ENCODE measurements at regions of chr6 and their contacts with region 1.

Region 1: DNA sequence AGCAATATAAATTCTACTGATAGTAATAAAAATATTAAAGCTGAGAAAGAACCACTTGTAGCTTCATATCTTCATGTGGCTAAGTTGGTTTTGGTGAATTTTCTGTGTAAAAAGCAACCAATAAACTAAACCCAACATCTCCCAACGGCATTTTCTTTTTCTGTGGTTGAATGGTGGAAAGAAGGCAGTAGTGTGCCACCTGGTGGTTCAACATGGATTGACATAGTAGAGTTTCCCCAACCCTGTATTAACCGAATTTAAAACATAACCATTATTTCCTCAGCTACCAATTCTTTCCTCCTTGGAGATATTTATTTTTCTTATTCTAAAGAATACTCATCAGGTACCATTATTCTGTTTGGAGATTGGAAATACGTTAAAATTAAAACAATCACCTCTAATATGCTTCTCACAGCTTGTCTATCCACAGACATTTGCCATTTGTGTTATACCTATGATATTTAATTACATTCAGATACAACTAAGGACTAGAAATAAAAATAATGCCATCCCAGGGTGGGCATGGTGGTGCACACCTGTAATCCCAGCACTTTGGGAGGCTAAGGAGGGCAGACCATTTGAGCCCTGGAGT is 117.1 kb upstream of the EEF1E1 start:
- DNase-seq: peak; percentile 27
- H3K4me3 ChIP-seq: no peak overlapping the region
- H3K27ac ChIP-seq: no peak overlapping the region
- H3K27me3 ChIP-seq: no peaks in the 10 kb centered on the region
- CTCF ChIP-seq: peak; percentile 84

Region 2: DNA sequence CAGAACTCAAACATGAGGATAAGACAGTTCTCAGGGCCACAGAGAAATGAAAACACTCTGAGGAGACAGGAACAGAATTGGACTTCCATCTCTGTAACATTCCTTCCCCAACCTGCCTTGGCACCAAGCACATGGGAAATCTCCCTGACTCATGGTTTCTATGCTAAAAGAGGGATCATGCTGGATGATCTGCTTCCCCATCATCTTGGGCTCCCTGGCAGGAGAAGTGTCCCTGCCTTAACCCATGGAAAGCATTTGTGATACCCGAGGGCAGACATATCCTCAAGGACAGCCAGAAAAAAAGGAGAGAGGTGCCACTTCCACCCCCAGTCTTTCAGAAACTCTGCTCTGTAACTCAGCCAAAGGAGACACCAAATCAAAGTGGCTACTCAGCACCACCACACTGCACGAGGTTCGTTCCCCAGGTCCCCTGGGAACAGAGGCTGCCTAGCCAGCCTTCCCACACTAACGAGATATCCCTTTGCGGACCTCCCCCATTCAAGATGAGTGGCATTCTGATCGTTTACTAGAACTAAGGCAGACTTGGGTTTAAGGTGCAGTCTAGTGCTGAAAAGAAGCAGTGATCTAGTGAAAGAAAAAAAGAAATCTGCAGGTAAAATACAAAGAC is 190.1 kb before region 1 on chr6:
- CTCF ChIA-PET with region 1: no interaction called
- POLR2A ChIA-PET with region 1: no interaction called
- DNase-seq: no peak
- H3K4me3 ChIP-seq: no peak overlapping the region
- H3K27ac ChIP-seq: no peak overlapping the region
- H3K27me3 ChIP-seq: no peaks in the 10 kb centered on the region
- CTCF ChIP-seq: no peak

Region 3: DNA sequence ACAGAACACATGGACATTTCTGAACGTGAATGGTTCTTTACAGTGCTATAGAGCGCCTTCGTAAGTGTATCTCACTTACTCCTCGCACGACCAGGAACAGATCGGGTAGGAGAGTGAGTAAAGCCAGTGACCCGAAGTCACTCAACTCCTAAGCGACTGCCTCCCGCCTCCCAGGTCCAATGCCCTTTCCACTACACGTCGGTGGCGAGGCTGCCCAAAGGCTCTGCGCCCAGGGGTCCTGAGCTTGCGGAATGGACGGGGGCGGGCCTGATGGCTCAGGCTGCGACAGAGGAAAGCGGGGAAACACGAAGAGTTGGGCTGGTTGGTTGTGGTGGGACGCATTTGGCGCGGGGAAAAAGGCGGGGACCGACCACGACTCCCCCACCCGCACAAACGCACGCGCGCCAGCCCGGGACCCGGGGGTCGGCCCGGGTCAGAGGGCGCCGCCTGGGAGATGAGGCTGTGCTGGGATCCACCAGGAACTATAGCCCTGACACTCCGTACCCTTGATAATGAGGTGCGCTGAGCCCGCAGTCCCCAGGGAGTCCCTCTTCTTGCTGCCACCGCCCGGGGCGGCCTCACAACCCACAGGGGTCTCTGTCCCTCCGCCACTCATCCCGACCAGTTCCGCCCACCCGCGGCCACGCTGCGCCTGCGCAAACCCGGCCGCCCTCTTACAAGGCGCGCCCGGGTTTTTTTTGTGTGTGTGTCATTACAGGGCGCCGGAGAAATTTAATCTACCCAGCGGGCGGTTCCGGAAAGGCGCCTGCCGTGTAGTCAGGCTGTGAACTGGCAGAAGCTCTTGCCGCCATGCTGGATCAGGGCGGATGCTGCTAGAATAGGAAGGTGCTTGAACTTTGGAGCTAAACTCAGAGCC is 155.4 kb before region 1 on chr6 and contains the start of gene BLOC1S5:
- CTCF ChIA-PET with region 1: interaction called, 10 read pairs
- POLR2A ChIA-PET with region 1: no interaction called
- DNase-seq: peak; percentile 91
- H3K4me3 ChIP-seq: peak within 1 kb of the TSS; percentile 90
- H3K27ac ChIP-seq: peak within 1 kb of the TSS; percentile 63
- H3K27me3 ChIP-seq: no peaks in the 10 kb centered on the region
- CTCF ChIP-seq: peak; percentile 12; the same call in 1 of the 2 replicates
- polyA plus RNA-seq, gene BLOC1S5: 8.4 and 15.1 TPM in 2 replicates

Region 4: DNA sequence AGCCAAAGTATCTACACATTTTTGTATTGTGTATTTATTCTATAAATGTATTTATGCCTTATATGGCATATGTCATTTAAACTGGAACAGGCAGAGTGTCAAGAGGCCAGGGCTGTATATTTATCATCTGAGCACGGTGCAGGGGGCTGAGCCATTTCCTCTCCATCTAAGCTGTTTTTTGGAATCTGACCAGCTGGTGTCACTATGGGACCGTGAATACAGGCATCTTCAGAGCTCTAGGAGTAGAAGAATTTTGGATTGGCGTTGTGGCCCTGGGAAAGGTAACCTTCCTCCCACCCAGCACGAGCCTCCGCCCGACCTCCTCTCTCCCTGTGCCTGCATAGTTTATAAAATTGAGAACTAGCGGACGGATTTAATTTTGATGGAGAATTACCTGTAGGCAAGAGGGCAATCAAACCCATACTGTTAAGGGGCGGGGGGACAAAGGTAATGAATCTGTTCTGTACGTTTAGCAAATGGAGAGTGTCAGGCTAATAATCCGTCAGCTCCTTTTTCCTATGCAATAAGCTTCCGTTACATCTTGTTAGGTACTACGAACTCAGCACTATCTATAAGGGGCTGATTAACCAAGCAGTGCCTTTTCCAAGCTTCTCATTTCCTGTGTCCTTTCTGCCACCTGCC is 88.1 kb before region 1 on chr6:
- CTCF ChIA-PET with region 1: interaction called, 945 read pairs
- POLR2A ChIA-PET with region 1: interaction called, 3 read pairs
- DNase-seq: peak; percentile 39
- H3K4me3 ChIP-seq: no peak overlapping the region
- H3K27ac ChIP-seq: no peak overlapping the region
- H3K27me3 ChIP-seq: no peaks in the 10 kb centered on the region
- CTCF ChIP-seq: peak; percentile 71

Region 5: GRCh38 chr6:8157839-8158238 is 61.6 kb before region 1 on chr6:
- CTCF ChIA-PET with region 1: interaction called, 31 read pairs
- POLR2A ChIA-PET with region 1: no interaction called
- DNase-seq: no peak
- H3K4me3 ChIP-seq: no peak overlapping the region
- H3K27ac ChIP-seq: no peak overlapping the region
- H3K27me3 ChIP-seq: no peaks in the 10 kb centered on the region
- CTCF ChIP-seq: no peak

Region 6: DNA sequence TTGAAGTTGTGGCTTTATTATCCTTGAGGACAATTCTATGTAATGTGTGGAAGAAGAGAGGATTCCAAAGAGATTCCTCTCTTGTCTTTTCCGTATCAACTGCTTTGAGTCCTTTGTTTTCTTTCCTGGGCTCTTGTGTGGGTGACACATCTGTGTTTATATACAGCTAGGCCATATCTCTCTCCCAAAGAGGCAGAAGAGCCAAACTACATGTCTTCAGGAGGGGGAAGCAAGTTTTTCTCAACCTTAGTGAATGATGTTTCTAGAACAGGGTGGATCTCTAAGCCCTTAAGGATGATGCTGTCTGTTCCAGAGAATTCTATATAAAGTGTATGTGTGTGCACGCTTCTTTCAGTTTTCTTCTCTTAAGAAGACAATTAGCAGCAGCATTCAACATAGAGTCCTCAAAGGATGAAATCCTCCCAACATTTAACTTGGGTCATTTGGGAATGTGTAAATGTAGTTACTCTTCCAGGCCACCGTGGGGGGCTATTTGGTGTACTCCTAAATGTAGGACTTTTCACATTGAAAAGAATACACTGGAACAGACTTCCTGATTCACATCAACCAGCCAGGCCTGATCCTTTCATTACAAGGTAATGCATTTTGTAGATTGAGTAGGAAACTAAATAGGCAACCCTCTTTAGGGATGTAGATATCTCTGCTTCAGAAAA is 24.3 kb before region 1 on chr6:
- CTCF ChIA-PET with region 1: interaction called, 28 read pairs
- POLR2A ChIA-PET with region 1: no interaction called
- DNase-seq: no peak
- H3K4me3 ChIP-seq: no peak overlapping the region
- H3K27ac ChIP-seq: no peak overlapping the region
- H3K27me3 ChIP-seq: no peaks in the 10 kb centered on the region
- CTCF ChIP-seq: no peak

Region 7: DNA sequence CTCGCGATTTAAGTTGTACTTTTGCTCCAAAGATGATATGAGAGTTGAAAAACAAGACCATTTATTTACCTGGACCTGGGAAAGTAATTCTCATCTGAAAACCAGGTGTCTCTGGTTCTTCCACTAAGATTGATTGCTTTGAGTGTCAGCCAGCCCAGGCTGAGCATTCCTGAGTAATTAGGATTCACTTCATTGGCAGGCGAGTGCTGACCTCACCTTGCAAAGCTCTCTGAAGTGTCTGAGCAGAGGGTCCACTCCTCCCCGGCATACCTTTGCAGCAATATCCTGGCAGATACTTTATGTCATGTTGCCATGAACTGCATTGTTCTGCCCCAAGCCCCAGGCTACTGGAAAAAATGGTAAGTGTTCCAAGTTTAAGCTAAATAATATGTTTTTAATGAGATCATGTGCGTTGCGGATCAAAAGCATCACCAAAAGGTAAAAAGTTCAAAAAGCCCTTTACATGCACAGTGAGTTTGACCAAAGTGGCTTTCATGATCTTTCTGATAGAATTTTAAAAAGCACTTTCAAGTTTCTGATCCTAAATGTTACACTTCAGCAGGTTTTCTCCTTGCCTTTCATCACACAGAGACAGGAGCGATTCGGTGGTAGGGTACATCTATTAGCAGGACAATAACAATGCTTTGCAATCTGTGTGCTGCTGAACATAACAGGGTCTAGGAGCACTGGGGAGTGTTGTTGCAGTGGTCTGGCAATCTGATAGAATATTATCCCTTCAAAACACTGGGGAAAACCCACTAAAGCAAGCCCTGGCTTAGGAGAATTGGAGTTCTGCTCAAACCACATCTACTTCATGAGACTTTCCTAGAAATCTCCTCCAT is 10.7 kb after region 1 on chr6:
- CTCF ChIA-PET with region 1: interaction called, 23 read pairs
- POLR2A ChIA-PET with region 1: no interaction called
- DNase-seq: no peak
- H3K4me3 ChIP-seq: no peak overlapping the region
- H3K27ac ChIP-seq: no peak overlapping the region
- H3K27me3 ChIP-seq: no peaks in the 10 kb centered on the region
- CTCF ChIP-seq: no peak

Measured in AG04450 (cell line).